CD8-positive, alpha-beta T cell (primary cell): ENCODE measurements at regions of chr12 and their contacts with region 1.

Region 1: DNA sequence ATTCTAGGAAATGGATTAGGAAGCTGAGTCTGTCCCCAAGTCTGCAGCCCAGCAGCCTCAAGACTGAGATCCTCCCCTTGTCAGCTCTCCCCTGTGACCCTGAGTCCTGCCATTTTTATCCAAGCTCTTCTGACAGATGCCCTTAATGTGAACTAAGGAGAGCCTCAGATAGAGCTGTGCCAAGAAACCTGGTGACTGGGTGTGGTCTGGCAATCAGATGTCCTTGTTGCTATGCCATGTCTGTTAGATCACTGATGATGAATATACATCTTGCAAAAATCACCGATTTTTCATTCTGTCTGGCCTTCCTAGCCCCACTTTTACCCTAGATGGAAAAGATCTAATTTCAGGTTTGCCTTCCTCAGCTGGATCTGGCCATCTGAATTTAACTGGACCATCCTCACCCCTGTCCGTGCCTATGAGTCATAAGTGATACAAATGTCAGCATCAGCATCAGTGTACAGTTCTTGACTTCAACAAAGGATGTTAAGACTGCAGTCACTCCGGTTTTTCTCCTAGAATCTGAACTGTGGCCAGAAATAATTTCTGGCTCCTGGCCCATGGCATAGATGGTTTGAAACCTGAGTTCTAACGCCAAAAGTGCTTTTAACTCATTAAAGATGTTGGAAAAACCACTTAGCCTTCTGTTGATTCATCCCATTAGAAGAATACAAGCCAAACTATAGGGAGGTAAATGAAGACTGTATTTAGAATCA is 61.2 kb upstream of the GRIP1 start:
- DNase-seq: no peak
- ATAC-seq: no peak
- H3K4me3 ChIP-seq: no peak overlapping the region
- H3K4me3 Mint-ChIP-seq: no peak overlapping the region
- H3K27ac ChIP-seq: no peak overlapping the region
- H3K27ac Mint-ChIP-seq: no peak overlapping the region
- H3K4me1 ChIP-seq: peaks cover 21% of the 10 kb centered on the region
- H3K4me1 Mint-ChIP-seq: peaks cover 20% of the 10 kb centered on the region
- H3K27me3 ChIP-seq: no peaks in the 10 kb centered on the region
- H3K27me3 Mint-ChIP-seq: no peaks in the 10 kb centered on the region
- CTCF ChIP-seq: no peak

Region 2: DNA sequence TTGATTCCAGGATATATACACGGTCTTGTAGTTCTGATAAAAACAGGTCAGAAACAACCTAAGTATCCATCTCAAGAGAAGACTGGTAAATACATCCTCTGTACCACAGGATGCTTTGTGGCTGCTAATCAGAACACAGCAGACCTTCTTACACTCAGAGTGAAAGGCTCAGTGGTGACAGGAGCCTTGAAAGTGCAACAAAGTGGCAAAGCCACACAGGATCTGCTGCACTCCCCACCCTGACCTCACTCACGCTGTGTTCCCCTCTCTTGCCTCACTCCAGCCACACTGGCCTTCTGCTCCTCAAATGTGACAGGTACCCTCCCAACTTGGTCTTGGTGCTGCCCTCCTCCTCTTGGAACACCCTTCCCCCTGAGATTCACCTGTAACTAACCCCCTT is 36.9 kb after region 1 on chr12:
- CTCF ChIA-PET with region 1: no interaction called
- POLR2A ChIA-PET with region 1: no interaction called
- intact Hi-C with region 1: loop called in 1 of 2 experiments (anchors 5 kb)
- DNase-seq: peak; percentile 1 to 79 (median 40)
- ATAC-seq: peak; percentile 94
- H3K4me3 ChIP-seq: no peak overlapping the region
- H3K4me3 Mint-ChIP-seq: peak overlapping the region; percentile 75
- H3K27ac ChIP-seq: peak overlapping the region; percentile 17 to 56
- H3K27ac Mint-ChIP-seq: peak overlapping the region; percentile 96
- H3K4me1 ChIP-seq: peaks cover 36% of the 10 kb centered on the region
- H3K4me1 Mint-ChIP-seq: peaks cover 51% of the 10 kb centered on the region
- H3K27me3 ChIP-seq: no peaks in the 10 kb centered on the region
- H3K27me3 Mint-ChIP-seq: no peaks in the 10 kb centered on the region
- CTCF ChIP-seq: no peak

Region 3: GRCh38 chr12:67141296-67142018 is 401.4 kb after region 1 on chr12:
- CTCF ChIA-PET with region 1: no interaction called
- POLR2A ChIA-PET with region 1: no interaction called
- intact Hi-C with region 1: no loop called
- DNase-seq: no peak
- ATAC-seq: no peak
- H3K4me3 ChIP-seq: no peak overlapping the region
- H3K4me3 Mint-ChIP-seq: no peak overlapping the region
- H3K27ac ChIP-seq: no peak overlapping the region
- H3K27ac Mint-ChIP-seq: no peak overlapping the region
- H3K4me1 ChIP-seq: no peaks in the 10 kb centered on the region
- H3K4me1 Mint-ChIP-seq: no peaks in the 10 kb centered on the region
- H3K27me3 ChIP-seq: no peaks in the 10 kb centered on the region
- H3K27me3 Mint-ChIP-seq: peaks cover 22% of the 10 kb centered on the region
- CTCF ChIP-seq: no peak

Region 4: DNA sequence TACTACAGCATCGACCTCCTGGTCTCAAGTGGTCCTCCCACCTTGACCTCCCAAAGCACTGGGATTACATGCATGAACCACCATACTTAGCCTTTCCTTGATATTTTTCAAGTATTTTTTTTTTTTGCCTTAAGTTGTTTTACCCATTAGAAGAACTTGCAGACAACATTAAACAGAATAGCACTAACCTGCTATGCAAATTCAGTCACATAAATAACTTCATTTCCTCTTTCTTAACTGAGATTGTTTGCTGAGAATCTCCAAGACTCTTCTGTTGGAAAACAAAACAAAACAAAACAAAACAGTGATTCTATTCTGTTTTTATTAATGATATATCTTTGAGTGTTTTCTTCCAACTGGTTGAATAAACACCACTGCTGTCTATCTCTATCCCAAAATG is 1133.3 kb after region 1 on chr12:
- CTCF ChIA-PET with region 1: no interaction called
- POLR2A ChIA-PET with region 1: no interaction called
- intact Hi-C with region 1: loop called in 1 of 2 experiments (anchors 5 kb)
- DNase-seq: no peak
- ATAC-seq: no peak
- H3K4me3 ChIP-seq: no peak overlapping the region
- H3K4me3 Mint-ChIP-seq: no peak overlapping the region
- H3K27ac ChIP-seq: no peak overlapping the region
- H3K27ac Mint-ChIP-seq: no peak overlapping the region
- H3K4me1 ChIP-seq: no peaks in the 10 kb centered on the region
- H3K4me1 Mint-ChIP-seq: no peaks in the 10 kb centered on the region
- H3K27me3 ChIP-seq: no peaks in the 10 kb centered on the region
- H3K27me3 Mint-ChIP-seq: no peaks in the 10 kb centered on the region
- CTCF ChIP-seq: no peak